ENCODE measurements at regions of chr6 and their contacts with region 1.

Region 1: GRCh38 chr6:87832025-87832825 is 130.2 kb upstream of the AKIRIN2 start:
- DNase-seq: peak; percentile 51
- ATAC-seq: peak; percentile 88
- H3K4me3 ChIP-seq: peak overlapping the region; percentile 15; the same call in 1 of the 2 replicates
- H3K27ac ChIP-seq: peak overlapping the region; percentile 77
- H3K4me1 ChIP-seq: peaks cover 10% of the 10 kb centered on the region
- H3K27me3 ChIP-seq: no peaks in the 10 kb centered on the region
- CTCF ChIP-seq: peak; percentile 43 to 69 (median 54); a peak in 5 of 6 replicates
- EP300 ChIP-seq: peak in 1 of 2 experiments; percentile 32; a peak in 1 of 4 replicates
- POLR2A ChIP-seq: no peak
- RAD21 ChIP-seq: peak; percentile 80

Region 2: GRCh38 chr6:87701676-87702588 is 130.3 kb before region 1 on chr6 and contains the start of gene AKIRIN2:
- CTCF ChIA-PET with region 1: interaction called, 7 read pairs
- POLR2A ChIA-PET with region 1: interaction called, 3 read pairs
- RAD21 ChIA-PET with region 1: interaction called, 16 read pairs
- SMC1A ChIA-PET with region 1: interaction called, 13 read pairs
- in situ Hi-C with region 1: no loop called
- intact Hi-C with region 1: no loop called
- DNase-seq: peak; percentile 97
- ATAC-seq: peak; percentile 73
- H3K4me3 ChIP-seq: peak within 1 kb of the TSS; percentile 96
- H3K27ac ChIP-seq: peak within 1 kb of the TSS; percentile 97
- H3K4me1 ChIP-seq: peaks cover 33% of the 10 kb centered on the region
- H3K27me3 ChIP-seq: no peaks in the 10 kb centered on the region
- CTCF ChIP-seq: no peak
- EP300 ChIP-seq: no peak
- POLR2A ChIP-seq: peak; percentile 94
- RAD21 ChIP-seq: no peak
- polyA plus RNA-seq, gene AKIRIN2: 12.7 to 16.8 TPM

Region 3: DNA sequence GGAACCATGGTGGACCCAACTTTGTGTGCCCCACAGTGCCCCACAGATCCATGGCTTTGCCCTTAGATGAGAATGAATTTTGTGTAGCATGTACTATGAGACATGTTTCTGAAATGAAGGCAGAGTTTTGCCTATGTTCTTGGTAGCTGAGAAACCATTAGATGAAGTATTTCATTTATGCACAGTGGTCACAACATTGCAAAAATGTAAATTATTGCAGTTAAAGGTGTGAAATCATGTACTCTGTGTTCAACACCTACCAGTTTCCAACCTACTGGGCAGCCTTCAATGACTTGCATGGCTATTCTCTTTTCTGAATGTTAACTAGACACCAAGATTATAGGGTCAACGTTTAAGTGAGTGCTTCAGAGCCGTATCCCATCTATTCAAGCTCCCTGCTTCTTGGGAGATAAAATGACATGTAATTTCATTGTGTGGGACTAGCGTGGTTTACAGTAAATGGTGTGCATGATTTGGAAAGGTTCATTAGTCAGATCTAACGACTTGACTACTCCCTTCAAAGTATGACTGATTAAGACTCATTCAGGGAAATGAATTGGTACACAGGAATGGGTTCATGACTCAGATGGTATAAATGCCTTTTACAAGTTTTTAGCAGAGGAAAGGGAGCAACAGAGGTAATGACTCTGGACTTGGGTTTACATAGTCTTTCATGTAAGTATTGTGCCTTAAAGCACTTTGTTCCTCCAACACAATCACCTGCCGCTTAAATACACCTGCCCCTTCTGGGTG is 24.0 kb before region 1 on chr6:
- CTCF ChIA-PET with region 1: interaction called, 8 read pairs
- POLR2A ChIA-PET with region 1: interaction called, 4 read pairs
- RAD21 ChIA-PET with region 1: interaction called, 24 read pairs
- SMC1A ChIA-PET with region 1: interaction called, 16 read pairs
- in situ Hi-C with region 1: no loop called
- intact Hi-C with region 1: no loop called
- DNase-seq: no peak
- ATAC-seq: peak; percentile 45
- H3K4me3 ChIP-seq: no peak overlapping the region
- H3K27ac ChIP-seq: peak overlapping the region; percentile 43
- H3K4me1 ChIP-seq: peaks cover 27% of the 10 kb centered on the region
- H3K27me3 ChIP-seq: no peaks in the 10 kb centered on the region
- CTCF ChIP-seq: no peak
- EP300 ChIP-seq: no peak
- POLR2A ChIP-seq: no peak
- RAD21 ChIP-seq: no peak

Region 4: DNA sequence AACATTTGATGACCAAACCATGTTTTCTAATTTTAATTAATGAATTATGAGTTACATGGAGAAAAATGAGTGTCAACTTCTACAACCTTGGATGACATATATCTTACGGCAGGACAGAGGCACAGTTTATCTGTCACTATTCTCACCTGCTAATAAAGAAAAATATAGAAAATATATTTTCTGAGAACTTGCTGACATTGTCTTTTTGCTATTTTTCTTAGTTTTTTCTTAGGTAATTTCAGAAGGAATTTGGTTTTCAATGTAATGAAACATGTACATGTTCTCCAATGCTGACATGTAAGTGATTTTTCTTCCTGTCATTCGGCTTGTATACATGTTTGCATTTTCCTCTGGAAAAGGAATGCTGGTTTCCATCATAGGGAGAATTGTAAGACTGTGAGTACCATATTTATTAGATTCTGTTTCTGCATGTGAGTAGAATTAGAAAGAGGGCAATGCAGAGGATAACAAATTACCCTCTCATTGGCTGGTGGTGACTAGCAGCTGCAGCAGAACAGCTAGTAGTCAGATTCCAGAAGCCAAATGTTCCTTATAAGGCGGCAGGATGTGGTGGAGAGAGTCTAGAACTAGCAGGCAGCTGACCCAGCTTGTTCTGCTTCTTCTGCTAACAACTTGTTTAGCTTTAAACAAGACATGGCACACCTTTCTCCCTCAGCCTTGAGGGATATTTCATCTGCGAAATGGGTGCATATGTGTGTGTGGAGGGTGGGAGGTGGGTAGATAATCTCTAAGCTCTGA is 82.6 kb after region 1 on chr6:
- CTCF ChIA-PET with region 1: interaction called, 10 read pairs
- POLR2A ChIA-PET with region 1: no interaction called
- RAD21 ChIA-PET with region 1: interaction called, 20 read pairs
- SMC1A ChIA-PET with region 1: interaction called, 21 read pairs
- in situ Hi-C with region 1: no loop called
- intact Hi-C with region 1: no loop called
- DNase-seq: no peak
- ATAC-seq: peak; percentile 39; the same call in 2 of the 3 replicates
- H3K4me3 ChIP-seq: no peak overlapping the region
- H3K27ac ChIP-seq: no peak overlapping the region
- H3K4me1 ChIP-seq: peaks cover 3% of the 10 kb centered on the region; the same call in 1 of the 2 replicates
- H3K27me3 ChIP-seq: no peaks in the 10 kb centered on the region
- CTCF ChIP-seq: no peak
- EP300 ChIP-seq: no peak
- POLR2A ChIP-seq: no peak
- RAD21 ChIP-seq: no peak

Region 5: GRCh38 chr6:88141561-88142296 is 309.5 kb after region 1 on chr6:
- CTCF ChIA-PET with region 1: interaction called, 3 read pairs
- POLR2A ChIA-PET with region 1: interaction called, 3 read pairs
- RAD21 ChIA-PET with region 1: interaction called, 10 read pairs
- SMC1A ChIA-PET with region 1: interaction called, 11 read pairs
- in situ Hi-C with region 1: no loop called
- intact Hi-C with region 1: no loop called
- DNase-seq: peak; percentile 84
- ATAC-seq: peak; percentile 94
- H3K4me3 ChIP-seq: 0 out of 2 replicates have a peak overlapping the region, but pooled peaks have one; percentile 29
- H3K27ac ChIP-seq: peak overlapping the region; percentile 61
- H3K4me1 ChIP-seq: peaks cover 18% of the 10 kb centered on the region
- H3K27me3 ChIP-seq: no peaks in the 10 kb centered on the region
- CTCF ChIP-seq: no peak
- EP300 ChIP-seq: peak in 1 of 2 experiments; percentile 40; a peak in 1 of 4 replicates
- POLR2A ChIP-seq: no peak
- RAD21 ChIP-seq: peak; percentile 37

Region 6: DNA sequence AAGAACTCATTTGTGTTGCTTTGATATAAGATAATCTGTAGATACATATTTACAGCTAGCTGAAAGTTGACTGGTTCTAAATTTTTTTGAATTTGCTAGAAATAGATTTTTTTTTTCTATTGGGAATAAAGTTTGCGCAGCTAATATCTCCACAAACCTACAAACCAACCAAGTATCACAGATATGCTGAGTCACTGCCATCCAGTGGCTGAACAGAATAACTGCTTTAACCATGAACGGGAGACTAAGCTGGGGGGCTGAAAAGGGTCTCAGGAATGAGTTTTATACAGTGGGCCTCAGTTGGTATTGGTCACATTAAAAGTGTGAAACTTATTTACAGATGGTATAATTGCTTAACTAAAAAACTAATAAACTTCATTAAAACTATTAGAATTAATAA is 660.6 kb after region 1 on chr6:
- CTCF ChIA-PET with region 1: interaction called, 15 read pairs
- POLR2A ChIA-PET with region 1: no interaction called
- RAD21 ChIA-PET with region 1: interaction called, 16 read pairs
- SMC1A ChIA-PET with region 1: interaction called, 15 read pairs
- in situ Hi-C with region 1: no loop called
- intact Hi-C with region 1: loop called (anchors 2 kb)
- DNase-seq: no peak
- ATAC-seq: no peak
- H3K4me3 ChIP-seq: no peak overlapping the region
- H3K27ac ChIP-seq: peak overlapping the region; percentile 91
- H3K4me1 ChIP-seq: peaks cover 16% of the 10 kb centered on the region
- H3K27me3 ChIP-seq: no peaks in the 10 kb centered on the region
- CTCF ChIP-seq: peak; percentile 10 to 27 (median 15); a peak in 2 of 6 replicates
- EP300 ChIP-seq: no peak
- POLR2A ChIP-seq: no peak
- RAD21 ChIP-seq: peak; percentile 52

Region 7: DNA sequence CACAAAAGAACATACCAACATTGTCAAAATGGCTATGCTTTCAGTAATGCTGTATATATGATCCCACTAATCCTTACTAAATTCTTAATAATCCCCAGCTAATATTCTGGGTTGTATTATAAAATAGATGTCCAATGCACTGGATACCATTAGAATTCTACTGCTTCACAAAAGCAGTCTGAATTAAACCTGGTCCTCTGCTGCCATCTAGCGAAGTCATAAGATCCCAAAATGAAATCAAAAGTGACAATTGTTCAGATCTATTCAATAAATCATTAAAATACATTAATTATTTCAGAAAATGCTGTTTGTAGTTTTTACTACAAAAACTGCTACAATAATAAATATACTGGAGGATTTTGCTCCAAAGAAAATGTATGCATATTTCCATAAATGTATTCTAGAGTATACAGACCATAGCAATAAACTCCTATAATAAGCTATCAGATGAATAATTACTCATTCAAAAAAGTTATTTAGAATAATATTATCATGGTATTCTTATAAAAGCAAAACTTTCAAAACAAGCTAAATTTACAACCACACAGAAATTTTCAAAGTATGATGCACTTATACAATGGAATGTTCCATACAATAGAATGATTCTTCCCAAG is 1038.6 kb after region 1 on chr6:
- CTCF ChIA-PET with region 1: interaction called, 67 read pairs
- POLR2A ChIA-PET with region 1: no interaction called
- RAD21 ChIA-PET with region 1: interaction called, 68 read pairs
- SMC1A ChIA-PET with region 1: interaction called, 93 read pairs
- in situ Hi-C with region 1: loop called (anchors 5 kb)
- intact Hi-C with region 1: loop called (anchors 1 kb)
- DNase-seq: peak; percentile 39
- ATAC-seq: peak; percentile 78
- H3K4me3 ChIP-seq: no peak overlapping the region
- H3K27ac ChIP-seq: no peak overlapping the region
- H3K4me1 ChIP-seq: peaks cover 10% of the 10 kb centered on the region
- H3K27me3 ChIP-seq: no peaks in the 10 kb centered on the region
- CTCF ChIP-seq: peak; percentile 46 to 70 (median 55); a peak in 5 of 6 replicates
- EP300 ChIP-seq: no peak
- POLR2A ChIP-seq: no peak
- RAD21 ChIP-seq: peak; percentile 89